ENCODE measurements at regions of chr3 and their contacts with region 1.

Region 1: GRCh38 chr3:159091936-159092335 is 290.1 kb downstream of the MFSD1 start:
- DNase-seq: no peak
- H3K4me3 Mint-ChIP-seq: no peak overlapping the region
- H3K27ac Mint-ChIP-seq: no peak overlapping the region
- H3K4me1 Mint-ChIP-seq: no peaks in the 10 kb centered on the region
- H3K27me3 Mint-ChIP-seq: no peaks in the 10 kb centered on the region
- CTCF ChIP-seq: peak; percentile 52

Region 2: GRCh38 chr3:159210336-159210735 is 118.4 kb after region 1 on chr3:
- CTCF ChIA-PET with region 1: no interaction called
- intact Hi-C with region 1: loop called (anchors 10 kb)
- DNase-seq: no peak
- H3K4me3 Mint-ChIP-seq: no peak overlapping the region
- H3K27ac Mint-ChIP-seq: no peak overlapping the region
- H3K4me1 Mint-ChIP-seq: peaks cover 8% of the 10 kb centered on the region
- H3K27me3 Mint-ChIP-seq: no peaks in the 10 kb centered on the region
- CTCF ChIP-seq: no peak

Measured in Calu3 (cell line).